AG04450 (cell line): ENCODE measurements at regions of chr2 and their contacts with region 1.

Region 1: DNA sequence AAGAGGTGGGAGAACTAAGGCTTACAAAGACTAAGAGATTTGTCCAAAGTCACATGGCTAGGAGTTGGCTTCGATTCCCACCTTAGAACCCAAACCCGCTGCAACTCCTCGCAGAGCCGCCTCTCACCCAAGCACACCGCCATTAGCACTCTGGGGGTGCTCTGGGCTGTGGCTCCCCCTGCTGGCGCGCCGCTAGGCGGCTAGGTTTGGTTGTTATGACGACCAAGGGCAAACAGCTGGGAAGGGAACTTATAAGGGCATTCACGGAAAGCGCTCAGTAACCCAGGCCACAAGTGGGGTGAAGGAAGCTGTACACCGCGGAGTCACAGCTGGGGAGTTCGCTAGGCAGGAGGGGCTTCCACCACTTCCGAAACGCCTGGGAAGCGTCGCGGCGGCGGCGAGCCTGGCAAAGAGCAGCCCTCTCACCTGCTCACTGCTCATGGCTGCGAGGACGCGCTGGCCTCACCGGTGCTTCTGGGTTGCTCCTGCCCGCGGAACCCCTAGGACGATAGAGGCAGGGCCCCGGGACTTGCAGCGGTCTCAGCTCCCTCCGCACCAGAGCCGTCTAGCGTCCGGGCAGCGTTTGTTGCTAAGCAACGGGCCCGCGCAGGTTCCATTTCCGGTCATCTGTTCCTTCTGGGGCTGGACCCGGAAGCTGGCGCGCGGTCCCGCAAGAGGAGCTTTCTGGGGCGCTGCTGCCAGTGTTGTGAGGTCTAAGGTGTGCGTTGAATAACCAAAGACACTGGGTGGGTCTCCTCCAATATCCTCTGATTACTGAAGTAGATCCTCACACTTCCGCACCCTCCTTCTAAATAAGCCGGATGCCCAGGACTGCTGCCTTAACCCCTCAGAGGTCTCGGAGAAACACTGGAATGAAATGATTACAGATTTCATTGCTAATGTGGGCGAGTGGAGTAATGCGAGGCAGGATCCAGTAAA is at the start of gene DNAH7:
- DNase-seq: peak; percentile 58
- H3K4me3 ChIP-seq: peak within 1 kb of the TSS; percentile 96
- H3K27ac ChIP-seq: peak within 1 kb of the TSS; percentile 60
- H3K27me3 ChIP-seq: no peaks in the 10 kb centered on the region
- CTCF ChIP-seq: peak; percentile 99
- polyA plus RNA-seq, gene DNAH7: 0.74 and 1.2 TPM in 2 replicates

Region 2: DNA sequence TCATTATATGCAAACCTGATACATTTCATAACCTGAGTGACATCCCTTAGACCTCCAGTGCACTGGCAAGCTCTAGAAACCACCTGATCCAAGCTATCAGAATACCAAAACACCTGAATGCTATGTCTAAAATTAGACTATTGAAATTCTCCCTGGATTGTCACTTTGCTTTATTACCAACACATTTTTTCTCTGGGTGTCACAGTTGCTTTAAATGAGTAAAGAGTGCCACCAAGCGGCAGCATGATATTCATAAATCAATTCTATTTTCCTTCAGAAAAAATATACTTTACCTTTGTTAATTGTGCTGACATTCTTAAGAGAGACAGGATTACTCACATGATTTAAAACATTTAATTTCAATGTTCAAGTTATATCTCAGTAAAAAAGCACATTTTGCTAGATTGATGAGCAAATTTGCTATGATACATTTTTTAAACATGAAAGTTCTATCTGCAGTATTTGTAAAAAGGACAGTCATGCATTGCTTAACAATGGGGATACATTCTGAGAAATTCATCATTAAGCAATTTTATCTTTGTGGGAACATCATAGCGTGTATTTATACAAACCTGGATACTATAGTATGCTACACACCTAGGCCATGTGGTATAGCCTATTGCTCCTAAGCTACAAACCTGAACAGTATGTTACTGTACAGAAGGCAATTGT is 750.0 kb before region 1 on chr2:
- CTCF ChIA-PET with region 1: interaction called, 13 read pairs
- POLR2A ChIA-PET with region 1: no interaction called
- DNase-seq: no peak
- H3K4me3 ChIP-seq: no peak overlapping the region
- H3K27ac ChIP-seq: no peak overlapping the region
- H3K27me3 ChIP-seq: no peaks in the 10 kb centered on the region
- CTCF ChIP-seq: peak; percentile 45; the same call in 1 of the 2 replicates

Region 3: DNA sequence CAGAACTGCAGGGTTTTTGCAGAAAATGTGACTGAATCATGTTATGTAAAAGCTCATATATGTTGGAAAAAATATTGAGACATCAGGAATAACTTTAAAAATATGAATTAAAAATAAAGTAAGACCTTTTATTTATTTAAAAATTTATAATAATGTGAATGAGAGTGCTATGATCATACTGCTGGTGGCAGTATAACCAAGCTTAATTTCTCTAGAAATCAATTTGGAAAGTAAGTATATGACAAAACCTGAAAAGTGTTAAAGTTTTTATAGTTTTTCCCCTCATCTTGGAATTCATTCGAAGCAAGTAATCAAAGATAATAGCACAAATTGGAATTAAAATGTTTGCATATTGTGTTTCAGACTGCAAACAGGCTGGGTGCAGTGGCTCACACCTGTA is 404.0 kb before region 1 on chr2:
- CTCF ChIA-PET with region 1: interaction called, 87 read pairs
- POLR2A ChIA-PET with region 1: no interaction called
- DNase-seq: no peak
- H3K4me3 ChIP-seq: no peak overlapping the region
- H3K27ac ChIP-seq: no peak overlapping the region
- H3K27me3 ChIP-seq: no peaks in the 10 kb centered on the region
- CTCF ChIP-seq: peak; percentile 42

Region 4: DNA sequence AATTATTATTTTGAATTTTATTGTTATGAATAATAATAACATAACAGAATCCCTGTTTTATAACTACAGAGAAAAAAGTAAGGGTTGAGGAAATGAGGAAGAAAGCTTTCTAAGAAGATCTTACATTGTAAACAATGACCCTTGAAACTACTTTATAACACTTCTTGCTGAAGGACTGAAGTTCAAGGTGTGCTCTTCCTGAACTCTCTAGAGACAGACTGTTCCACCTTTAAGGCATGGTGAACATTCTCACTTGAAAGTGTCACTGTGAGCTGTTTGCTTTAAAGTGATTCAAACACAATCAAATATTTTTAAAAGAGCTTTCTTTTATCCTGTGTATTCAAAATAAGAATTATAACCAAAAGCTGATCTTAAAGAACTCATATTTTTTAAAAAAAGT is 131.4 kb before region 1 on chr2:
- CTCF ChIA-PET with region 1: interaction called, 23 read pairs
- POLR2A ChIA-PET with region 1: no interaction called
- DNase-seq: no peak
- H3K4me3 ChIP-seq: no peak overlapping the region
- H3K27ac ChIP-seq: no peak overlapping the region
- H3K27me3 ChIP-seq: no peaks in the 10 kb centered on the region
- CTCF ChIP-seq: no peak

Region 5: DNA sequence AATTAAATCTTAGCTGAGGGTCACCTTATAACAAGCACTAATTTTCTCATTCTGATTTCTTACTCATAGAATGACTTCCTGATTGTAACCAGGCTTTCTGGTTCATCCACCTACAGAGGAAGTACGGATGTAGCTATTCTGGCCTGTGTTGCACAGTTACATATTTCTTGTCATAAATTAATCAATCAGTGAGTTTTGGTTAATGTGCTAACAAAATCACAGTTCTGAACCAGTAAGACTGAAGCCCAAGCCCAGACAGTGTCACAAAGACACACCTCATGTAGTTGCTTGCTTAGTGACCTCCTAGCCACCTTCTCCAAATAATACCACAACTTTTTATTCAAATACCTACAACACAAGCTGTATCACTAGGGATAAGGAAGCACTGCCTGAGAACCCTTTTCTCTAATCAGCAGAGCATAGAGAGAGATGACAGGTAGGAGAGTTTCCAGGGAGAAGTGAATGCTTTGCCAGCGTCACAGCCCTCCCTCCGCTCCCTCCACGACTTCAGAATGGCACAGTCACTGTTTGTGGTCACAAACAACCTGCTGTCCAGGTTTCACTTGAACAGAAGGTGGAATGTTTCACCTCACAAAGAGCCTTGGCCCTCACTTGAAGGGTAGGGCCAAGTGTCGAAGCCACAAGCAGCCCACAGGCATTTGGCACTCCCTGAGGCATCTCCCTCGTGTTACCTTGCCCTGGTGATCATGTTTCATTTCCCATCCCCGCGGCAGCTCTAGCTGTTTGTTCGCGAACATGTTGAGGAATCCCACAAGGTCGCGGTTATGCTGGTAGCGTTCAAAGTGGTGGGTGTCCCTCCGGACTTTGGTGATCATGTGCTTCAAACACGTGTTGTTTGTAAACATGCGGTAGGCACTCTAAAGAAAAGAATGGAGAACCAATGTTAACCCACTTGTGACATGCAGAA is 223.6 kb after region 1 on chr2:
- CTCF ChIA-PET with region 1: interaction called, 14 read pairs
- POLR2A ChIA-PET with region 1: no interaction called
- DNase-seq: no peak
- H3K4me3 ChIP-seq: no peak overlapping the region
- H3K27ac ChIP-seq: no peak overlapping the region
- H3K27me3 ChIP-seq: no peaks in the 10 kb centered on the region
- CTCF ChIP-seq: no peak

Region 6: DNA sequence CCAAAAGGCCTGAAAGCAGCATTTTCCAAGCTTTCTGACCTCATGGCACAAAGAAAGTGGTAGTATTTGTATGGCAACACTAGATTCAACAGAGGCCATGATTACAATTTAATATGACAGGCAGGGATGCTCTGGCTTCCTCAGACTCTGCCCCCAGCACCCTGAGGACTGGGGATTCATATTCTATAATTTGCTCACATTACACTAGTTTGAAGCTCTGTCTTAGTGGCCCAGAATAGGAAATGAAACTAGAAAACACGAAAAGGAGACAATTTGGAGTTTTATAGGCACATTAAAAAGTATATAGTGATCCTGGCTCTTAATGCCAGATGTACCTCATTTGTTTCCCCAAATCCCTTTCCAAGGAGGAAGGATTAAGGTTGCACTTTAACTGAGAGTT is 275.9 kb after region 1 on chr2:
- CTCF ChIA-PET with region 1: interaction called, 10 read pairs
- POLR2A ChIA-PET with region 1: no interaction called
- DNase-seq: no peak
- H3K4me3 ChIP-seq: no peak overlapping the region
- H3K27ac ChIP-seq: no peak overlapping the region
- H3K27me3 ChIP-seq: no peaks in the 10 kb centered on the region
- CTCF ChIP-seq: no peak

Region 7: DNA sequence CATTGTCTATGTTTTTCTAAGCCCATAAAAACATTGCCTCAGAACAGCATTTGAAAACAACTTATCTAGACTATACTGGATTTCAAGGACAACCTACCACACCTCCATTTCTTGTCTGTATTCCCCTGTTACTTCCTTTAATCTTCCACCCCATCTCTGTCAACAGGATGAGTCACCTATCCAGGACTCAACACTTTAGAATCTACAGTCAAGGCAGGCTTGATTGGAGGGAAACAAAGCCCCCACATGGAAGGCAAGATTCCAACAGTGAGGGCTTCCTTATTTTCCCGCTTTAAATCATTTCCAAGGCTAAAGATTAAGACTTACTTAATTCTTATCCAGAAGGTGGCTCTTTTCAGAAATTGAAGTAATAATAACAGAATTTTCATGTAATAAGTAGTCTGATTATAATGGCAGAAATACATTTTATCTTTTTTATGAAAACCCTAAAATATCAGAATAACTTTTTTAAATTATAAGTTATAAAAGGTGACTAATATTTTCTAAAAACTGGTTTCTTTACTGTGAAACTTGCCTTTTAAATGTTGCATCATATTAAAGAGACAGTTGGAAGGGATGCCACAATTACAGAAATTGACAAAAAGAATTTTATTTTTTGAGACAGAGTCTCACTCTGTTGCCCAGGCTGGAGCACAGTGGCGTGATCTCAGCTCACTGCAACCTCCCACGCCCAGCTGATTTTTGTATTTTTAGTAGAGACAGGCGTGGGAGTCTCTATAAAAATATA is 432.3 kb after region 1 on chr2:
- CTCF ChIA-PET with region 1: no interaction called
- POLR2A ChIA-PET with region 1: no interaction called
- DNase-seq: no peak
- H3K4me3 ChIP-seq: no peak overlapping the region
- H3K27ac ChIP-seq: no peak overlapping the region
- H3K27me3 ChIP-seq: no peaks in the 10 kb centered on the region
- CTCF ChIP-seq: no peak

Region 8: GRCh38 chr2:197306696-197307040 is 1238.1 kb after region 1 on chr2:
- CTCF ChIA-PET with region 1: no interaction called
- POLR2A ChIA-PET with region 1: no interaction called
- DNase-seq: no peak
- H3K4me3 ChIP-seq: no peak overlapping the region
- H3K27ac ChIP-seq: no peak overlapping the region
- H3K27me3 ChIP-seq: no peaks in the 10 kb centered on the region
- CTCF ChIP-seq: no peak